GM12878 (cell line): ENCODE measurements at regions of chr6 and their contacts with region 1.

Region 1: GRCh38 chr6:137102851-137103492 is 58.2 kb upstream of the IL20RA start:
- DNase-seq: peak; percentile 100
- ATAC-seq: peak; percentile 82
- H3K4me3 ChIP-seq: no peak overlapping the region
- H3K27ac ChIP-seq: peak overlapping the region; percentile 98
- H3K4me1 ChIP-seq: peaks cover 73% of the 10 kb centered on the region
- H3K27me3 ChIP-seq: no peaks in the 10 kb centered on the region
- CTCF ChIP-seq: no peak
- EP300 ChIP-seq: peak; percentile 97
- POLR2A ChIP-seq: peak; percentile 65
- RAD21 ChIP-seq: peak; percentile 44

Region 2: GRCh38 chr6:137122610-137123009 is 19.6 kb after region 1 on chr6:
- CTCF ChIA-PET with region 1: interaction called, 30 read pairs
- POLR2A ChIA-PET with region 1: interaction called, 20 read pairs
- RAD21 ChIA-PET with region 1: interaction called, 49 read pairs
- SMC1A ChIA-PET with region 1: interaction called, 69 read pairs
- in situ Hi-C with region 1: no loop called
- intact Hi-C with region 1: loop called (anchors 2 kb)
- DNase-seq: no peak
- ATAC-seq: peak; percentile 74
- H3K4me3 ChIP-seq: no peak overlapping the region
- H3K27ac ChIP-seq: peak overlapping the region; percentile 91
- H3K4me1 ChIP-seq: peaks cover 35% of the 10 kb centered on the region
- H3K27me3 ChIP-seq: no peaks in the 10 kb centered on the region
- CTCF ChIP-seq: no peak
- EP300 ChIP-seq: no peak
- POLR2A ChIP-seq: no peak
- RAD21 ChIP-seq: peak; percentile 12; the same call in 1 of the 2 replicates

Region 3: DNA sequence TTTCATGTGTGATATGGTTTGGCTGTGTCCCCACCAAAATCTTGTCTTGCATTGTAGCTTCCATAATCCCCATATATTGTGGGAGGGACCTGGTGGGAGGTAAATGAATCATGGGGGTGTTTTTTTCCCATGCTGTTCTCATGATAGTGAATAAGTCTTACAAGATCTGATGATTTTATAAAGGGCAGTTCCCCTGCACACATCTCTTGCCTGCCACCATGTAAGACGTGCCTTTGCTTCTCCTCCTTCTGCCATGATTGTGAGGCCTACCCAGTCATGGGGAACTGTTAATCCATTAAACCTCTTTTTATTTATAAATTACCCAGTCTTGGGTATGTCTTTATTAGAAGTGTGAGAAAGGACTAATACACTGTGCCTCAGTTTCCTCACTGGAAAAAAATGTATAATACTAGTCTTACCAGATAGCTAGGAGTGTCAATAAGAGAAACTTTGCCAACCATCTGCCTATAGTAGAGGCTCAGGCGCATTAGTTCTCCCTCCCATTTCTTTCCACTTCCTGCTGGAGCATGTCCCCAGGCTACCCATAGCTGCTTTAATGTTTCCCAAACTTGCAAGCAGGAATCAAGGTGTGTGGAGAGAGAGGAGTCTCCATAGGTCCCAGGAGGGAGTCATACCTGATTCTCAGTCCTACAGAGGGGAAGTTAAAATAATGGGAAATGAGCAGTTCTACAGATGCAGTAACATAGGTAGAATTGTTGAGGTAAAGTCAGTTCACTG is 74.8 kb after region 1 on chr6:
- CTCF ChIA-PET with region 1: interaction called, 10 read pairs
- POLR2A ChIA-PET with region 1: interaction called, 15 read pairs
- RAD21 ChIA-PET with region 1: interaction called, 500 read pairs
- SMC1A ChIA-PET with region 1: interaction called, 293 read pairs
- in situ Hi-C with region 1: no loop called
- intact Hi-C with region 1: no loop called
- DNase-seq: no peak
- ATAC-seq: no peak
- H3K4me3 ChIP-seq: no peak overlapping the region
- H3K27ac ChIP-seq: no peak overlapping the region
- H3K4me1 ChIP-seq: peaks cover 19% of the 10 kb centered on the region
- H3K27me3 ChIP-seq: no peaks in the 10 kb centered on the region
- CTCF ChIP-seq: no peak
- EP300 ChIP-seq: no peak
- POLR2A ChIP-seq: no peak
- RAD21 ChIP-seq: no peak

Region 4: GRCh38 chr6:137224799-137225198 is 121.8 kb after region 1 on chr6:
- CTCF ChIA-PET with region 1: interaction called, 3 read pairs
- POLR2A ChIA-PET with region 1: interaction called, 4 read pairs
- RAD21 ChIA-PET with region 1: interaction called, 16 read pairs
- SMC1A ChIA-PET with region 1: interaction called, 13 read pairs
- in situ Hi-C with region 1: loop called (anchors 5 kb)
- intact Hi-C with region 1: no loop called
- DNase-seq: peak; percentile 70
- ATAC-seq: peak; percentile 76
- H3K4me3 ChIP-seq: no peak overlapping the region
- H3K27ac ChIP-seq: peak overlapping the region; percentile 84
- H3K4me1 ChIP-seq: peaks cover 67% of the 10 kb centered on the region
- H3K27me3 ChIP-seq: no peaks in the 10 kb centered on the region
- CTCF ChIP-seq: no peak
- EP300 ChIP-seq: 0 out of 4 replicates have a peak, but pooled peaks of 1 of the 2 experiments have one; percentile 48
- POLR2A ChIP-seq: no peak
- RAD21 ChIP-seq: no peak

Region 5: DNA sequence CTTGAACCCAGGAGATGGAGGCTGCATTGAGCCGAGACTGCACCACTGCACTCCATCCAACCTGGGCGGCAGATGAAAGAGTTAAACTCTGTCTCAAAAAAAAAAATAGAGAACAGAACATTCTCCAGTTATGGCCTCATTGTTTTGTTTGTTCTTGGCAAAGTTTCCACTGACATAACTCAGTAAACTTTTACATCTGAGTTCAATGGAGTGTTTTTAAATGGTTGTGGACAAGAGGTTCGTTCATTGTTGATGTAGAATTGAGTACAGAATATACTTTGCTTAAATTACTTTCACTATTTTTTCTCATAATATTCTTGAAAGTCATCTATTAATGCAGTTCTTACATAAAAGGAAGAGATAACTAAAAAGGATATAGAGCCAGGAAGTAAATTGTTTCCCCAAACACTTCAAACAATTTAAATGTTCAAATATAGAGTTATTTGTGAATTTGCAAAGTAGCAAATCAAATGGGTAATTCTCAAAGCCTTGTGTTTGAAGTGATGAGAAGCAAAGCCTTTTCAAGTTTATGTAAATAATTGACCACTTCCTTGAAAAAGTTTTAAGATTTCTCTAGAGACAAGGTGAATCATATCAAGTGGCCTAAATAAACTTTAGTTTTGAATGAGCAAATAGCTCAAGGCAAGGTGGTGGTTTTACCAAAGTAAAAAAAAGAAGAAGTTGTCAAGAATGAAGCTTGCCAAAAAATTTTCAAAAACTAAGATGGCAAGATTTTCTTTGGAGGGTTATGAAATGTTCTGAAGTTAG is 158.6 kb after region 1 on chr6:
- CTCF ChIA-PET with region 1: interaction called, 6 read pairs
- POLR2A ChIA-PET with region 1: interaction called, 3 read pairs
- RAD21 ChIA-PET with region 1: interaction called, 14 read pairs
- SMC1A ChIA-PET with region 1: interaction called, 17 read pairs
- in situ Hi-C with region 1: no loop called
- intact Hi-C with region 1: no loop called
- DNase-seq: peak; percentile 72
- ATAC-seq: peak; percentile 77
- H3K4me3 ChIP-seq: no peak overlapping the region; the same call in 1 of the 2 replicates
- H3K27ac ChIP-seq: peak overlapping the region; percentile 54
- H3K4me1 ChIP-seq: peaks cover 13% of the 10 kb centered on the region
- H3K27me3 ChIP-seq: no peaks in the 10 kb centered on the region
- CTCF ChIP-seq: no peak
- EP300 ChIP-seq: peak; percentile 52 to 84; a peak in 3 of 4 replicates
- POLR2A ChIP-seq: no peak
- RAD21 ChIP-seq: no peak

Region 6: GRCh38 chr6:137927777-137928218 is 824.8 kb after region 1 on chr6:
- CTCF ChIA-PET with region 1: no interaction called
- POLR2A ChIA-PET with region 1: no interaction called
- RAD21 ChIA-PET with region 1: no interaction called
- SMC1A ChIA-PET with region 1: no interaction called
- in situ Hi-C with region 1: no loop called
- intact Hi-C with region 1: loop called (anchors 5 kb)
- DNase-seq: peak; percentile 99
- ATAC-seq: peak; percentile 93
- H3K4me3 ChIP-seq: peak overlapping the region; percentile 19; the same call in 1 of the 2 replicates
- H3K27ac ChIP-seq: peak overlapping the region; percentile 98
- H3K4me1 ChIP-seq: peaks cover 61% of the 10 kb centered on the region
- H3K27me3 ChIP-seq: no peaks in the 10 kb centered on the region
- CTCF ChIP-seq: no peak
- EP300 ChIP-seq: peak; percentile 91; a peak in 3 of 4 replicates
- POLR2A ChIP-seq: peak; percentile 69; the same call in 1 of the 2 replicates
- RAD21 ChIP-seq: 0 out of 2 replicates have a peak, but pooled peaks have one; percentile 4